Spleen (tissue), 13 donors: ENCODE measurements at regions of chrX and their contacts with region 1.

Region 1: GRCh38 chrX:150508451-150509367 is 59.7 kb upstream of the MTM1 start:
- DNase-seq: no peak
- H3K4me3 ChIP-seq: peak overlapping the region in 1 of 8 donors; percentile 39
- H3K27ac ChIP-seq: peak overlapping the region in 7 of 8 donors; percentile 63 to 82 (median 78)
- H3K4me1 ChIP-seq: peaks cover 0 to 17% (median 0%) of the 10 kb centered on the region in 6 donors
- H3K27me3 ChIP-seq: no peaks in the 10 kb centered on the region
- CTCF ChIP-seq: no peak
- POLR2A ChIP-seq: no peak

Region 2: DNA sequence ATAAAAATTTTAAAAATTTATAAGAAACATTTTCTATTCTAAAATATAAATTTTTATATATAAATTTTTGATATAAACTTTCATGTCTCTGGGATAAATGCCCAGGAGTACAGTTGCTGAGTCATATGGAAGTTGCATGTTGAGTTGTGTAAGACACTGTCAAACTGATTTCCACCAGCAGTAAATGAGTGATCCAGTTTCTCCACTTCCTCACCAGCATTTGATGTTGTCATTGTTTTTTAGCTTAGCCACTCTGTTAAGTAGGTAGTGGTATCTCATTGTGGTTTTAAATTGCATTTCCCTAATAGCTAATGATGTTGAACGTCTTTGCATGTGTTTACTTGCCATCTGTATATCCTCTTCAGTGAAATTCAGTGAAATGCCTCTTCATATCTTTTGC is 79.1 kb before region 1 on chrX:
- intact Hi-C with region 1: no loop called
- DNase-seq: no peak
- H3K4me3 ChIP-seq: no peak overlapping the region
- H3K27ac ChIP-seq: no peak overlapping the region
- H3K4me1 ChIP-seq: no peaks in the 10 kb centered on the region
- H3K27me3 ChIP-seq: no peaks in the 10 kb centered on the region
- CTCF ChIP-seq: no peak
- POLR2A ChIP-seq: no peak

Region 3: DNA sequence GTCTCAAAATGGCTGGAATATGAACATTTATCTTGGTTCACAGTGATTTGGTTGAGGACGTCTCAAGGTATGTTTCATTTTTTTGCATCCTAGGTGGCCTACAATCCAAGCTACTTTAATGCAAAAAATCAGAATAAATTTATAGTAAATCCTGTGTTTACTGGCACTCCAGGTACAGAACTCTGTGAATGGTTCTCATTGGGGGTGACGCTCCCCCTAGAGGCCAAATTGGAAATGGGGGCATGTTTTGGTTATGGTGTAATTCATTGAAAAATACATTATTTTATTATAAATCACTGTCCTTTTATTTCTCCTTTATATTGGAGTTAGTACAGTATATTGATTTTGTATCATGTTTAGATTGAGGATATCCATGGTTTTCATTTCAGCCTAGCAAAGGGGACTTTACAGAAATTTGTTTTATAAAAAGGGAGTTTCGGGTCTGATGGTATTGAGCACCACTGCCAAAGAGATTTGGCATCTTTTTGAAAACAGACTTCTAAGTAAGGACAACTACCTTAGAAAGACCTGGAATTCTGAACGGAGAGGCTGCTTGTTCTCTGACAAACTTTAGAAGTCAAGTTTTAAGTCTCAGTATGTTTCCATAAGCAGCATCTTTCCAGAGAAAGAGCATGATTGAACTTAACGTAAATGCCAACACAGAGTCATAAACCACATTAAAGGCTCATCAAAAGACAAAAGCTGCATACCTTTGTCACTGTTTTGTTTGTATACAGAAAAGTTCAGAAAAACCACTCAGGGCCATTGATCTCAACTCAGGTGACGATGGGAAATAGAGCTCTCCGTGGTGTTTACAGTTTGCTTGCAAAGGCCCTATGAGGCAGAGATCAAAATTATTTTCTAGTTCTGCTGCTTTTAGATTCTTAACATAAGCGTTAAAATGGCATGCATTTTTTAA is 79.1 kb after region 1 on chrX:
- intact Hi-C with region 1: loop called (anchors 10 kb)
- DNase-seq: no peak
- H3K4me3 ChIP-seq: no peak overlapping the region
- H3K27ac ChIP-seq: no peak overlapping the region
- H3K4me1 ChIP-seq: no peaks in the 10 kb centered on the region
- H3K27me3 ChIP-seq: no peaks in the 10 kb centered on the region
- CTCF ChIP-seq: peak; percentile 16 to 76 (median 60)
- POLR2A ChIP-seq: no peak

Region 4: GRCh38 chrX:150627957-150628356 is 119.2 kb after region 1 on chrX:
- intact Hi-C with region 1: no loop called
- DNase-seq: no peak
- H3K4me3 ChIP-seq: no peak overlapping the region
- H3K27ac ChIP-seq: no peak overlapping the region
- H3K4me1 ChIP-seq: no peaks in the 10 kb centered on the region
- H3K27me3 ChIP-seq: no peaks in the 10 kb centered on the region
- CTCF ChIP-seq: no peak
- POLR2A ChIP-seq: no peak